Activated CD4-positive, alpha-beta memory T cell treated with anti-CD3 and anti-CD28 coated beads for 36 hours (primary cell): ENCODE measurements at regions of chr17 and their contacts with region 1.

Region 1: DNA sequence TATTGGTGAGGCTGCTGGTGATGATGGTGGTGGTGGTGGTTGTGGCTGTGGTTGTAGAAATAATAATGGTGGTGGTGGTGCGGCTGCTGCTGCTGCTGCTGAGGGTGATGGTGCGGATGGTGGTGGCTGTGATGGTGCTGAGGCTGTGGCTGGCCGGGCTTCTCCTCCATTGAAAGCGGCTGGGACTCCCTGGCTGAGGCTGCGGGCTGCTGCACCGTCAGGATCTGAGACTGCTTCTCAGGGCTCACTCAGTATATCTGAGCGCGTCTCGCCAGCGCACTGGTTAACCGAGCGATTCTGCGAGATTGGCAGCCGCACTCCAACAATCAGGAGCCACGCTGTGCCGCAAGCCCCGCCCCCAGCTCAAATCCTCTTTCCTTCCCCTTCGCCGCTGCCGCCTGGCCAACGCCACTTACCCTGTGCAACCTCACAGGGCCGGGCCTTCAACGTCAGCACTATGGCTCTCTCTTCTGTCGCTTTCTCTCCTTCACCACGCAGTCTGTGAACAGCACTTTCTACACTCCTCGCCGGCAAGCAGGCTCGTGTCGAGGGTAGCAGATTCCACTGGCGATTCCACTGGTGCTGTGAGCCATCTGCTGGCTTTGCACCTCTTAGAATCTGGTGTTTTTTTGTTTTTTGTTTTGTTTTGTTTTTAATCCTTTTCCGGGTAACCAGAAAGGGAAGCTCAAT is at the start of gene NUFIP2:
- DNase-seq: peak; percentile 99
- H3K4me3 Mint-ChIP-seq: peak within 1 kb of the TSS; percentile 99
- H3K27ac Mint-ChIP-seq: peak within 1 kb of the TSS; percentile 96
- H3K4me1 Mint-ChIP-seq: peaks cover 31% of the 10 kb centered on the region
- H3K27me3 Mint-ChIP-seq: no peaks in the 10 kb centered on the region
- total RNA-seq, gene NUFIP2: 45.6 to 56.9 TPM

Region 2: DNA sequence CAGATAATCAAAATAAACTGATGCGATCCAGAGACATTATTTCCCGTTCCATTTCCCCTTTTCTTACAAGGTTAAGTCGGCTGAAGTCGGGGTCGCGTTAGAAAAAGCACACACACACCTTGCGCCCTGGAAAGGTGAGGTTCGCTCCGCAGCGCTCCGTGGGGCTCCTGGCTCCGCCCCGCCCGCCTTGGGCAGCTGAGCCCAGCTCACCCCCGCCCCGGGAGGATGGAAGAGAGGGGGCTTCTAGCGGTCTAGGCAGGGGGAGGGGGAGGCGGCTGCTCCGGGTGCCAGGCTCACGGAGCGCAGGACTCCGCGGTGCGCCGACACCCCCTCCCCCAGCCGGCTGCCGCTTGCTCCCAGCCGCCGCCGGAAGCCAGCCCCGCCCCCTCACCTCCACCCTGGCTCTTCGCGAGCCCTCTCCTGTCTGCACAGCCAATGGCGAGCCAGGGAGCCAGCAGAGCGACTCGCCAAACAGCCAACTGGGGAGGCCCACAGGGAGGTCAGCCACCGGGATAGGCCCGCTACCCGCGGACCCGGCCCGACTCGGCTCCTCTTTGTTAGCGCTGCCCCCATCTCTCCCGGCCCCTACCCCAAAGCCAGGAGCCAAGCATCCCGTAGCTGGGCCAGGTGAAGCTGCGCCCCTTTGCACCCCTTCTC is 481.8 kb before region 1 on chr17:
- CTCF ChIA-PET with region 1: no interaction called
- POLR2A ChIA-PET with region 1: no interaction called
- intact Hi-C with region 1: loop called (anchors 5 kb)
- DNase-seq: peak; percentile 98
- H3K4me3 Mint-ChIP-seq: peak overlapping the region; percentile 82
- H3K27ac Mint-ChIP-seq: peak overlapping the region; percentile 92
- H3K4me1 Mint-ChIP-seq: peaks cover 43% of the 10 kb centered on the region
- H3K27me3 Mint-ChIP-seq: no peaks in the 10 kb centered on the region

Region 3: DNA sequence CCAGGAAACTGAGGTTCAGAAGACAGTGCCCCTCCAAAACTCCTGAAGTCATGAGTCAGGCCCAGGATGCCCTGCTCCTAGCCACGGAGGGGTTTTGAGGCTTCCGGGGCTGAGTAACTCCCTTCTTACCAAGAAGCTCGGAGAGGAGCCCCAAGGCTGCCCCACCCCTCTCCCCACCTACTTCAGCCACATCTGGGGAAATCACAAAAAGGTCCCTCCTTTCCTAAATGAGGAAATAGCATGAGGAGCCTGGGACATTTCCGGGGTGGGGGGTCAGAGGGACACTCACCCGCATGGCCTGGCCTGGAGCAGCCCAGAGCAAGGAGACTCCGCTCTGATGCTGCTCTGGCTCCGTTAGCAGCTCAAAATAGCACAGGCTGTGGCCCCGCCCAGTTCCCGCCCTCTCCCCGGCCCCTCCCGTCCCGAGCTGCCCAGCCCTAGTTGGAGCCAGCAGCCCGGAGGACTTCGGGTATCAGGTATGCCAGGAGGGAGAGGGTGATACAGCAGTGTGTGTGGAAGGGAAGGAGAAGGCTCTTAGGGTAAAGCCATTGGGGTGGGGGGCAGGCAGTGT is 153.9 kb before region 1 on chr17:
- CTCF ChIA-PET with region 1: interaction called, 11 read pairs
- POLR2A ChIA-PET with region 1: interaction called, 7 read pairs
- intact Hi-C with region 1: loop called (anchors 2 kb)
- DNase-seq: peak; percentile 93
- H3K4me3 Mint-ChIP-seq: peak overlapping the region; percentile 93
- H3K27ac Mint-ChIP-seq: peak overlapping the region; percentile 97
- H3K4me1 Mint-ChIP-seq: peaks cover 69% of the 10 kb centered on the region
- H3K27me3 Mint-ChIP-seq: no peaks in the 10 kb centered on the region

Region 4: DNA sequence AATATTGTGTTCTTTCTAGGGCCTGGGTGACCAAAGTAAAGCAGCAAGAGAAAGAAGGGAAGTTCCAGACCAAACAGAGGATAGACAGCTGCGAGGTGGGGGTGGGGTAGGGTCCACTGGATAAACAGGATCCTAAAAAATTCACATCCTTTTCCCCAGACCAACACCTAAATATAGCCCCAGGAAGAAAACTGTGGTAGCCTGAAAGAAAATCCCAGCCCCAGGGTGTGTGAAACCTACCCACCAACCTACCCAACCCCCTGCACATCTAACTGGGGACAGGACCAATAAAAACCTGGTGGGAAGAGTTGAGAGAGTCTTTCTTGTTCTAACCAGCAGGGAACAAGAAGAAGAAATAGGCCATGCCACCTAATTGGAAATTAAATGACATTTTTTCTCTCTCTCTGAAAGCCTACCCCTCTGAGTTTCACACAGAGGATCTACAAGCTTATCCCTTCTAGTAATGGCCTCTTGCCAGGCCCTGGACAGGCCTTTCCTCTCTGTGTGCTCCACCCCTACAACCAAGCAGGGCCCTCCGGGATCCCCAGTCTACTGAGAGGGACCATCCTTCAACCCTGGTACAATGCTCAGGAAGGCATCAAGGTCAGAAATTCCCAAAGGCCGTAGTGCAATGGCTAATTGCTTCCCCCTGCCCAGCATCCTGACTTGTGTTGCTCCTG is 125.8 kb before region 1 on chr17:
- CTCF ChIA-PET with region 1: no interaction called
- POLR2A ChIA-PET with region 1: no interaction called
- intact Hi-C with region 1: no loop called
- DNase-seq: no peak
- H3K4me3 Mint-ChIP-seq: no peak overlapping the region
- H3K27ac Mint-ChIP-seq: no peak overlapping the region
- H3K4me1 Mint-ChIP-seq: no peaks in the 10 kb centered on the region
- H3K27me3 Mint-ChIP-seq: no peaks in the 10 kb centered on the region

Region 5: GRCh38 chr17:29256735-29257466 is 37.1 kb before region 1 on chr17:
- CTCF ChIA-PET with region 1: interaction called, 17 read pairs
- POLR2A ChIA-PET with region 1: interaction called, 18 read pairs
- intact Hi-C with region 1: loop called (anchors 5 kb)
- DNase-seq: no peak
- H3K4me3 Mint-ChIP-seq: no peak overlapping the region
- H3K27ac Mint-ChIP-seq: peak overlapping the region; percentile 70
- H3K4me1 Mint-ChIP-seq: peaks cover 43% of the 10 kb centered on the region
- H3K27me3 Mint-ChIP-seq: no peaks in the 10 kb centered on the region

Region 6: GRCh38 chr17:29389982-29390850 is 96.2 kb after region 1 on chr17 and contains the start of gene TAOK1:
- CTCF ChIA-PET with region 1: interaction called, 4 read pairs
- POLR2A ChIA-PET with region 1: interaction called, 6 read pairs
- intact Hi-C with region 1: loop called (anchors 2 kb)
- DNase-seq: peak; percentile 98
- H3K4me3 Mint-ChIP-seq: peak within 1 kb of the TSS; percentile 95
- H3K27ac Mint-ChIP-seq: peak within 1 kb of the TSS; percentile 85
- H3K4me1 Mint-ChIP-seq: peaks cover 36% of the 10 kb centered on the region
- H3K27me3 Mint-ChIP-seq: no peaks in the 10 kb centered on the region
- total RNA-seq, gene TAOK1: 29.8 to 34.3 TPM

Region 7: DNA sequence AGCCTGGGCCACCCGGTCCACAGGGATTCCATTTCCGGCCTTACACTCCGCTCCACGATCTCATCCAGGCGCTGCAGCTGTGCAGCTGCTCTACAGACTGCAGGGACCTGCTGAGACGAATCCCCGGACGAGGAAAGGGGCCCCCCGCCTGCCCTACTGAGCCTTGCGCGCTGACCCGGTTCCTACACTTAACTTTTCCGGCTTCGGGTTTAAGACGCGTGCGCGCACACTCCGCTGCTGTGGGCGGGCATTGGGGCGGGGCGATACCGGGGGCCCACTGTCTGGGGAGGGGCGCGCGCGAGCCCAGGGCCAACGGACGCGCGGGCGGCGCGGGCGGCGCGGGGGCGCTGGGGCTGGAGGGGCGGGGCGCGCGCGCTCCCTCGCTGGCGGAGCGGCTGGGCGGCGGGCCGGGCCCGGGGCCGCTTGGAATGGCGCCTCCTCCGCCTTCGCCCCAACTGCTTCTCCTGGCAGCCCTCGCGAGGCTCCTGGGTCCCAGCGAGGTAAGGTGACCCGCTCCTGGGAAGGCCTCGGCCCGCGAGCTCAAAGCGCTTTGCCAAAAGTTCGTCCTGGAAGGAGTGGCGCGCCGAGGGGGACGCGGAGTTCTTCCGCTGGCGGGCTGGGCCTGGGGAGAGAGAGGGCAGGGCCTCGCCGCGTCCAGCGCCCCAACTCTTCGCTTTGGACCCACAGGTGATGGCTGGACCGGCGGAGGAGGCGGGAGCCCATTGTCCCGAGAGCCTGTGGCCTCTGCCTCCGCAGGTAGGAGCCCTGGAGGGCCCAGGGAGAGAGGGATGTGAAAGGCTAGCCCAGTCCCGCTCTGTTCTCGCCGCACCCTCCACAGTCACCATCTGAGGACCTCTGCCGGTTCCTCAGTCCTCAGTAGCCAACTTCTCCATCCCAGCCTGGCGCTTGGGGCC is 274.6 kb after region 1 on chr17 and contains the start of gene TP53I13:
- CTCF ChIA-PET with region 1: interaction called, 4 read pairs
- POLR2A ChIA-PET with region 1: interaction called, 5 read pairs
- intact Hi-C with region 1: loop called (anchors 1 kb)
- DNase-seq: peak; percentile 93
- H3K4me3 Mint-ChIP-seq: peak within 1 kb of the TSS; percentile 86
- H3K27ac Mint-ChIP-seq: peak within 1 kb of the TSS; percentile 94
- H3K4me1 Mint-ChIP-seq: peaks cover 38% of the 10 kb centered on the region
- H3K27me3 Mint-ChIP-seq: no peaks in the 10 kb centered on the region
- total RNA-seq, gene TP53I13: 54.2 to 55.3 TPM